Ascending aorta (tissue), 2 donors: ENCODE measurements at regions of chr15 and their contacts with region 1.

Region 1: GRCh38 chr15:74571191-74571590 is 30.2 kb downstream of the ARID3B start:
- DNase-seq: no peak
- H3K4me3 ChIP-seq: no peak overlapping the region
- H3K27ac ChIP-seq: peak overlapping the region; percentile 65 to 90
- H3K4me1 ChIP-seq: peaks cover 2 to 20% of the 10 kb centered on the region in 2 donors
- H3K27me3 ChIP-seq: no peaks in the 10 kb centered on the region
- CTCF ChIP-seq: no peak

Region 2: GRCh38 chr15:74545880-74546656 is 25.1 kb before region 1 on chr15:
- intact Hi-C with region 1: loop called (anchors 1 kb)
- DNase-seq: peak; percentile 87 to 97
- H3K4me3 ChIP-seq: peak overlapping the region; percentile 10 to 11
- H3K27ac ChIP-seq: peak overlapping the region in 1 of 2 donors; percentile 10
- H3K4me1 ChIP-seq: peaks cover 2 to 34% of the 10 kb centered on the region in 2 donors
- H3K27me3 ChIP-seq: no peaks in the 10 kb centered on the region
- CTCF ChIP-seq: no peak